BJ (cell line): ENCODE measurements at regions of chr1 and their contacts with region 1.

Region 1: DNA sequence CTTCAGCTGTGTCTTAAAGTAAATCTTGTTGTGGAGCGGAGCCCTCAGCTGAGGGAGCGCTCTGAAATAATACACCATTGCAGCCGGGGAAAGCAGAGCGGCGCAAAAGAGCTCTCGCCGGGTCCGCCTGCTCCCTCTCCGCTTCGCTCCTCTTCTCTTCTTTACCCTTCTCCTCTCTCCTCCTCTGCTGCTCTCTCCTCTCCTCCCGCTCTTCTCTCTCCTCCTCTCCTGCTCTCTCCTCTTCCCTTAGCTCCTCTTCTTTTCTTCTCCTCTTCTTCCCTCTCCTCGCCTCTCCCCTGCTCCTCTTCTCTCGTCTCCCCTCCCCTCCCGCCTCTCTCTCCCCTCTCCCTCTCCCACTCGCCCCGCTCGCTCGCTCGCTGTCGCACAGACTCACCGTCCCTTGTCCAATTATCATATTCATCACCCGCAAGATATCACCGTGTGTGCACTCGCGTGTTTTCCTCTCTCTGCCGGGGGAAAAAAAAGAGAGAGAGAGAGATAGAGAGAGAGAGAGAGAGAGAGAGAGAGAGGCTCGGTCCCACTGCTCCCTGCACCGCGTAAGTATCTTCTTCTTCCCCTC is at the start of gene PROX1:
- DNase-seq: peak; percentile 35
- H3K4me3 ChIP-seq: peak within 1 kb of the TSS; percentile 65
- H3K27me3 ChIP-seq: peaks cover 24% of the 10 kb centered on the region
- CTCF ChIP-seq: peak; percentile 26; the same call in 1 of the 2 replicates
- polyA plus RNA-seq, gene PROX1: 0.02 and 0.11 TPM in 2 replicates

Region 2: GRCh38 chr1:213939888-213940287 is 48.1 kb before region 1 on chr1:
- CTCF ChIA-PET with region 1: no interaction called
- POLR2A ChIA-PET with region 1: interaction called, 18 read pairs
- DNase-seq: no peak
- H3K4me3 ChIP-seq: no peak overlapping the region
- H3K27me3 ChIP-seq: no peaks in the 10 kb centered on the region
- CTCF ChIP-seq: no peak

Region 3: GRCh38 chr1:213977486-213977842 is 10.6 kb before region 1 on chr1:
- CTCF ChIA-PET with region 1: no interaction called
- POLR2A ChIA-PET with region 1: no interaction called
- DNase-seq: no peak
- H3K4me3 ChIP-seq: no peak overlapping the region
- H3K27me3 ChIP-seq: peaks cover 3% of the 10 kb centered on the region
- CTCF ChIP-seq: no peak